CD8-positive, alpha-beta memory T cell (primary cell): ENCODE measurements at regions of chr1 and their contacts with region 1.

Region 1: DNA sequence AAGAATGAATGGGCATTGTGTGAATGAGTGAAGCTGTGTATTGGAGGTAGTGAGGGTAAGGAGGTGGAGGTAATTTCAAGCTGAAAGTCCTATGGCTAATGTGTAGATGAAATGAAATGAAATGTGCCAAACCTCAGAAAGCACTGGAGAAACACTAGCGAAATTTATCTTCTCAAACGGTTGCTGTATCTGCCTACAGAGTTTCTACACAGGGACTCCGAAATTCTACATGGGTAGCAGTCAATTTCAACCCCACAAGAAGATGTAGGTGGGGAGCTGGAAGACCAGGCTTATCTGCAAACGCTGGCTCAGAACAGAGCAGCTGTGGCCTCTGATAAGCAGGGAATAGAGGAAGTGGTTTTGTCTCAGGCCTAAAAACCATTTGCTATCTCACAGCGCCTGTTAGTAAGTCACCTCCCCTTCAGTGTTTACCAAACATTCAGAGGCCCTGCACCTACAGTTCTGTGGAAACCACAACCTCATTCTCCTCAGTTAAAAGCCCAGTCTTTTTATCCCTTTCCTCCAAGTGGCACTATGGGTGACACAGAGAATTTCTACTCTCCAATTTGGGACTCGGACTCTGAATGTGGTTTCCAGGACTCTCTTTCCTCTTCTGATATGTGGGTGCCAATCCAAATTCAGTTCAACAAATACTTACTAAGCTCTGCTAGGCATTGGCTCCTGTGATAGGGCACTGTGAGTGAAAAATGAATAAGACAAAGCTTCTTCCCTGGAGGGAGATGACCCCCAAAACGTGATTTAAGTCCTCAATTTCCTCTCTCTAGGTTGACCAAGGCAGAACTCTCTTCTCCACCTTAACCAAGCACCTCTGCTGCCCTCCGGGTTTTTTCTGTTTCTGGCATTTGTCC is 17.2 kb upstream of the SLAMF6 start:
- DNase-seq: peak; percentile 16 to 75 (median 52)
- H3K4me3 ChIP-seq: peak overlapping the region; percentile 21
- H3K4me3 Mint-ChIP-seq: peak overlapping the region; percentile 8 to 84 (median 73)
- H3K27ac ChIP-seq: peak overlapping the region; percentile 82
- H3K27ac Mint-ChIP-seq: peak overlapping the region; percentile 80 to 98 (median 94)
- H3K4me1 ChIP-seq: peaks cover 54% of the 10 kb centered on the region
- H3K4me1 Mint-ChIP-seq: peaks cover 58 to 74% (median 73%) of the 10 kb centered on the region in 3 donors
- H3K27me3 ChIP-seq: no peaks in the 10 kb centered on the region
- H3K27me3 Mint-ChIP-seq: no peaks in the 10 kb centered on the region

Region 2: DNA sequence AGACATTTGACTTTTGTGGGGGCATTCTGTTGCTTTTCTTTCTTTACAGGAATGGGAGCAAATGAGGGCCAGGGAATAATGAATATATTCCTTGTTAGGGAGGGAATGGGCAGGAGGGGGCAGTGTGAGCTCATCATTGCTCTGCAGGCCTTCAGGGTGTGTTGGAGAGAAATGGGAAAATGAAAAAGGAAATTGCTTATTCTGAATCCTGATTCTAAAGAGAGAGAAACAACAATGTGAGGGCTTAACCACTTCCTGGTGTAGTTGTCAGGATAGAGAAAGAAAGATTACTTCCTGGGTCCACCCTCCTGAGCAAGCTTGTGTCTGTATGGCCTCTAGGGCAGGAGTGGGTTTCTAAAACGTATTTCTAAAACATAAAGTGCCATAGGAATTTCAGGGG is 111.6 kb before region 1 on chr1:
- CTCF ChIA-PET with region 1: interaction called, 15 read pairs
- POLR2A ChIA-PET with region 1: no interaction called
- DNase-seq: peak in 3 of 5 donors; percentile 24 to 44 (median 39)
- H3K4me3 ChIP-seq: no peak overlapping the region
- H3K4me3 Mint-ChIP-seq: peak overlapping the region; percentile 0 to 75 (median 57)
- H3K27ac ChIP-seq: no peak overlapping the region
- H3K27ac Mint-ChIP-seq: peak overlapping the region; percentile 69 to 97 (median 87)
- H3K4me1 ChIP-seq: peaks cover 62% of the 10 kb centered on the region
- H3K4me1 Mint-ChIP-seq: peaks cover 62 to 66% (median 62%) of the 10 kb centered on the region in 3 donors
- H3K27me3 ChIP-seq: no peaks in the 10 kb centered on the region
- H3K27me3 Mint-ChIP-seq: no peaks in the 10 kb centered on the region

Region 3: DNA sequence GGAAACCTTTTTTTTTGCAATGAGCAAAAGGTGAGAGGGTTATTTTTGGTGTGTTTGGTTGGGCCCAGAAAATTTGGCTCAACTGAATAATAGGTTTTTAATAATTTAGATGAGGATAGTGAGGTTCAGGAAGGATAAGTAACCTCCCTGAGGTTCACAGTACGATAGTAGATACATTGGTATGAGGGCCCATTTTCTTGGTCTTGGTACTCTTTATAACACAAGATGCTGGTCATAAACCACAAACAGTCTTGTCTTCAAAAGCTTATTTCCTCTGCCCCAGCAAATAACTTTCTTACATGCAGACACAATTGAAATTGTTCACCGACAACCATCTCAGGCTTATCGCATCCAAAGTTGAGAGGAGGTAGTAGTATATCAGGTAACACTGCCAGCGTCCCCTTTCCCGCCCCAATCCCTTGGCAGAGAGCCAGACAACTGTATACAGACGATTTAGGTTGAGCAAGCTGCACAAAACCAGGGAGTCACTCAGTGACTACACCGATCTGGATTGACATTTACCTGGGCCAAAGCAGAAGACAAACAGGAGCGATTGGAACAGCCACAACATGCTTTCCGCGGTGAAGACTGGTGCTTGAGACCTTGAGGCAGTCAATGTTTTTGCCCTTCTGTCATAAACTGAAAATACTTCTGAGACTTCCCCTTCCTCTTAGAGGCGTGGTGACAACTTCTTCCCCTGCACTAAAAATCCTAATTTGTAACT is 17.4 kb before region 1 on chr1 and contains the start of gene SLAMF6:
- CTCF ChIA-PET with region 1: interaction called, 12 read pairs
- POLR2A ChIA-PET with region 1: interaction called, 11 read pairs
- DNase-seq: peak in 4 of 5 donors; percentile 15 to 59 (median 53)
- H3K4me3 ChIP-seq: peak within 1 kb of the TSS; percentile 91
- H3K4me3 Mint-ChIP-seq: peak within 1 kb of the TSS; percentile 95 to 99 (median 96)
- H3K27ac ChIP-seq: peak within 1 kb of the TSS; percentile 62
- H3K27ac Mint-ChIP-seq: peak within 1 kb of the TSS; percentile 87 to 98 (median 94)
- H3K4me1 ChIP-seq: peaks cover 50% of the 10 kb centered on the region
- H3K4me1 Mint-ChIP-seq: peaks cover 74 to 90% (median 83%) of the 10 kb centered on the region in 3 donors
- H3K27me3 ChIP-seq: no peaks in the 10 kb centered on the region
- H3K27me3 Mint-ChIP-seq: no peaks in the 10 kb centered on the region
- total RNA-seq, gene SLAMF6: 28.3 to 30.7 TPM

Region 4: GRCh38 chr1:160550572-160551034 is 10.4 kb after region 1 on chr1:
- CTCF ChIA-PET with region 1: interaction called, 13 read pairs
- POLR2A ChIA-PET with region 1: interaction called, 5 read pairs
- DNase-seq: peak; percentile 31 to 77 (median 39)
- H3K4me3 ChIP-seq: no peak overlapping the region
- H3K4me3 Mint-ChIP-seq: no peak overlapping the region
- H3K27ac ChIP-seq: no peak overlapping the region
- H3K27ac Mint-ChIP-seq: peak overlapping the region in 7 of 8 donors; percentile 21 to 86 (median 40)
- H3K4me1 ChIP-seq: peaks cover 6% of the 10 kb centered on the region
- H3K4me1 Mint-ChIP-seq: peaks cover 43 to 81% (median 72%) of the 10 kb centered on the region in 3 donors
- H3K27me3 ChIP-seq: no peaks in the 10 kb centered on the region
- H3K27me3 Mint-ChIP-seq: peaks cover 0 to 1% of the 10 kb centered on the region in 2 donors

Region 5: DNA sequence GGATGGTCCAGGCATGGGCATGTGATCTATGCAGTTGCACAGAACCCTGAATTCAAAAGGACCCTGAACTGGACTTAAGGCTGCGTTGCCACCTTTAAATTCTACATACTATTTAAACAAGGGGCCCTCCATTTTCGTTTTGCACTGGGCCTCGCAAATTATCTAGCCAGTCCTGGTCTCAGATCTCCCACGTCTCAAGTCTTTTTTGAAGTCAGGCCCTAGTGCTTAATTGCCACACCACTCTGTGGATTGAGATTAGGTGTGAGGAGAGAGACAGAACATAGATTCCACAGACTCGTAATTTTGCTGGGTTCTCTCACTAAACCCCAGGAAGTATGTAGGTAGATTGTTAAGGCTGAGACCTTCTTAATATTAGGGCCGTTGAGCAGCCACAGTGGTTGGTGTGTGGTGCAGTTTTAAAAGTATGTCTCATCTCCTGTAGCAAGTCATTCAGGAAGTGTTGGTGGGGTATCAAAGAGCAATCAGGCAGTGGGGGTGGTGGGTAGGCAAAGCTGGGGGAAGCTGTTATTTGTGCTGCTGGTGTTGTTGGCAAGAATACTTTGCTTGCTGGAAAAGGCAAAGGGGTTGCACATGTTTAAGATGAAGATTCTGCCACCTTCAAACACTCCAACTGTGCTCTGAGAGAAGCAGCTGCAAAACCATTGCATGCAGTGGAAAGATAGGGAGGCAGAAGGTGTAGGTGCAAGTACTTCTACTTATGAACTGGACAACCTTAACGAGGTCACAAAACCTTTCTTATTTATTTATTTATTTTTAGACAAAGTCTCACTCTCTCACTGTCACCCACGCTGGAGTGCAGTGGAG is 27.8 kb after region 1 on chr1:
- CTCF ChIA-PET with region 1: interaction called, 34 read pairs
- POLR2A ChIA-PET with region 1: interaction called, 4 read pairs
- DNase-seq: peak; percentile 40 to 87 (median 79)
- H3K4me3 ChIP-seq: peak overlapping the region; percentile 23
- H3K4me3 Mint-ChIP-seq: peak overlapping the region; percentile 35 to 75 (median 63)
- H3K27ac ChIP-seq: peak overlapping the region; percentile 62
- H3K27ac Mint-ChIP-seq: peak overlapping the region; percentile 90 to 99 (median 96)
- H3K4me1 ChIP-seq: peaks cover 95% of the 10 kb centered on the region
- H3K4me1 Mint-ChIP-seq: peaks cover 93 to 100% (median 99%) of the 10 kb centered on the region in 3 donors
- H3K27me3 ChIP-seq: no peaks in the 10 kb centered on the region
- H3K27me3 Mint-ChIP-seq: no peaks in the 10 kb centered on the region

Region 6: GRCh38 chr1:160607011-160607671 is 66.9 kb after region 1 on chr1:
- CTCF ChIA-PET with region 1: interaction called, 218 read pairs
- POLR2A ChIA-PET with region 1: interaction called, 5 read pairs
- DNase-seq: peak; percentile 19 to 80 (median 76)
- H3K4me3 ChIP-seq: no peak overlapping the region
- H3K4me3 Mint-ChIP-seq: peak overlapping the region in 5 of 7 donors; percentile 19 to 56 (median 45)
- H3K27ac ChIP-seq: no peak overlapping the region
- H3K27ac Mint-ChIP-seq: peak overlapping the region; percentile 68 to 95 (median 92)
- H3K4me1 ChIP-seq: peaks cover 20% of the 10 kb centered on the region
- H3K4me1 Mint-ChIP-seq: peaks cover 46 to 61% (median 58%) of the 10 kb centered on the region in 3 donors
- H3K27me3 ChIP-seq: no peaks in the 10 kb centered on the region
- H3K27me3 Mint-ChIP-seq: no peaks in the 10 kb centered on the region

Region 7: GRCh38 chr1:160629286-160630210 is 89.3 kb after region 1 on chr1:
- CTCF ChIA-PET with region 1: no interaction called
- POLR2A ChIA-PET with region 1: no interaction called
- DNase-seq: peak; percentile 50 to 90 (median 85)
- H3K4me3 ChIP-seq: peak overlapping the region; percentile 52
- H3K4me3 Mint-ChIP-seq: peak overlapping the region; percentile 72 to 87 (median 82)
- H3K27ac ChIP-seq: peak overlapping the region; percentile 78
- H3K27ac Mint-ChIP-seq: peak overlapping the region; percentile 83 to 99 (median 98)
- H3K4me1 ChIP-seq: peaks cover 97% of the 10 kb centered on the region
- H3K4me1 Mint-ChIP-seq: peaks cover 99 to 100% (median 100%) of the 10 kb centered on the region in 3 donors
- H3K27me3 ChIP-seq: no peaks in the 10 kb centered on the region
- H3K27me3 Mint-ChIP-seq: no peaks in the 10 kb centered on the region

Region 8: GRCh38 chr1:160722726-160723125 is 182.5 kb after region 1 on chr1:
- CTCF ChIA-PET with region 1: no interaction called
- POLR2A ChIA-PET with region 1: no interaction called
- DNase-seq: no peak
- H3K4me3 ChIP-seq: no peak overlapping the region
- H3K4me3 Mint-ChIP-seq: peak overlapping the region in 5 of 7 donors; percentile 3 to 77 (median 49)
- H3K27ac ChIP-seq: no peak overlapping the region
- H3K27ac Mint-ChIP-seq: peak overlapping the region in 7 of 8 donors; percentile 43 to 90 (median 75)
- H3K4me1 ChIP-seq: peaks cover 21% of the 10 kb centered on the region
- H3K4me1 Mint-ChIP-seq: peaks cover 28 to 31% (median 30%) of the 10 kb centered on the region in 3 donors
- H3K27me3 ChIP-seq: no peaks in the 10 kb centered on the region
- H3K27me3 Mint-ChIP-seq: no peaks in the 10 kb centered on the region